WTC11 (cell line): ENCODE measurements at regions of chr2 and their contacts with region 1.

Region 1: DNA sequence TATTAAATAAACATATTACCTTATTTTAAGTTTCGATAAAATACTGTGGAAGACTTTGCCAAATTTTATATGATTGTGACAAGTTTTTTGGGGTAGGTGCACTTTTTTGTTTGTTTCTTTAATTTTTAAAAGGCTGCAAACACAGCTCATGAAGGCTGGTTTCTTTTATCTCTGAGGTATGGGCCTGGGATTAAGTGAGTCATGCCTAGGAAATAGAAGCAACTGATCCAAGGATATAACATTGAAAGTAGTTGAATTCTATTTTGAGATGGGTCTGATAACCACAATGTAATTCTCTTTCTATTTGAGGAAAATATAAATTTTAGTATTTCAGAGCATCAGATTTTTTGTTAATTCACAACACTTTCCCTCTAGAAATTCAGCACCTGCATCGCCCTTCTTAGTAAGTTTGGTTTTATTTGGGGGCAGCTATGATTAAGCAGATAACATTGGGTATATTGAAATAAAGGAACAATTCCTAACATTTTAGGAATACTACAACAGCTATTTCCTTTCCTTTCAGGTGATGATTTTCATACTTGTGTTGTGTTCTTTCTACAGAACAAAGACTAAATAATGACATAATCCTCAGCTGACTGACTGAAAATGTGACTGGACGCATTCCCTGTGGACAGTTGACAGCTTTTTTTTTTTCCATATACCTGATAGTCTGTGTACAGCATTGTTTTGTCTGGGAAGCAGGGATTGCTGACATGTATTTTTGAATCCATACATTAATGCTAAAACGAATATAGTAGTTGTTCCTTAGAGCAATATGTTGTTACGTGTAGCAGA is 16.8 kb downstream of the RBM45 start:
- DNase-seq: no peak
- ATAC-seq: no peak
- H3K4me3 Mint-ChIP-seq: no peak overlapping the region
- H3K27ac Mint-ChIP-seq: no peak overlapping the region; the same call in 1 of the 2 replicates
- H3K4me1 Mint-ChIP-seq: peaks cover 17% of the 10 kb centered on the region
- H3K27me3 Mint-ChIP-seq: no peaks in the 10 kb centered on the region
- CTCF ChIP-seq: no peak

Region 2: GRCh38 chr2:178112202-178113152 is 16.6 kb before region 1 on chr2 and contains the start of gene RBM45:
- CTCF ChIA-PET with region 1: interaction called, 47 read pairs
- POLR2A ChIA-PET with region 1: no interaction called
- DNase-seq: peak; percentile 91
- ATAC-seq: peak; percentile 96
- H3K4me3 Mint-ChIP-seq: peak within 1 kb of the TSS; percentile 92
- H3K27ac Mint-ChIP-seq: no peak within 1 kb of the TSS
- H3K4me1 Mint-ChIP-seq: peaks cover 8% of the 10 kb centered on the region; the same call in 1 of the 2 replicates
- H3K27me3 Mint-ChIP-seq: no peaks in the 10 kb centered on the region
- CTCF ChIP-seq: peak; percentile 94
- total RNA-seq, gene RBM45: 9.2 to 12.3 TPM (median 10.5 TPM) in 3 replicates